ENCODE measurements at regions of chr16 and their contacts with region 1.

Region 1: GRCh38 chr16:23608194-23608593 is 12.1 kb upstream of the NDUFAB1 start:
- DNase-seq: no peak
- ATAC-seq: no peak
- H3K4me3 Mint-ChIP-seq: no peak overlapping the region
- H3K27ac Mint-ChIP-seq: no peak overlapping the region
- H3K4me1 Mint-ChIP-seq: no peaks in the 10 kb centered on the region
- H3K27me3 Mint-ChIP-seq: no peaks in the 10 kb centered on the region
- CTCF ChIP-seq: no peak

Region 2: DNA sequence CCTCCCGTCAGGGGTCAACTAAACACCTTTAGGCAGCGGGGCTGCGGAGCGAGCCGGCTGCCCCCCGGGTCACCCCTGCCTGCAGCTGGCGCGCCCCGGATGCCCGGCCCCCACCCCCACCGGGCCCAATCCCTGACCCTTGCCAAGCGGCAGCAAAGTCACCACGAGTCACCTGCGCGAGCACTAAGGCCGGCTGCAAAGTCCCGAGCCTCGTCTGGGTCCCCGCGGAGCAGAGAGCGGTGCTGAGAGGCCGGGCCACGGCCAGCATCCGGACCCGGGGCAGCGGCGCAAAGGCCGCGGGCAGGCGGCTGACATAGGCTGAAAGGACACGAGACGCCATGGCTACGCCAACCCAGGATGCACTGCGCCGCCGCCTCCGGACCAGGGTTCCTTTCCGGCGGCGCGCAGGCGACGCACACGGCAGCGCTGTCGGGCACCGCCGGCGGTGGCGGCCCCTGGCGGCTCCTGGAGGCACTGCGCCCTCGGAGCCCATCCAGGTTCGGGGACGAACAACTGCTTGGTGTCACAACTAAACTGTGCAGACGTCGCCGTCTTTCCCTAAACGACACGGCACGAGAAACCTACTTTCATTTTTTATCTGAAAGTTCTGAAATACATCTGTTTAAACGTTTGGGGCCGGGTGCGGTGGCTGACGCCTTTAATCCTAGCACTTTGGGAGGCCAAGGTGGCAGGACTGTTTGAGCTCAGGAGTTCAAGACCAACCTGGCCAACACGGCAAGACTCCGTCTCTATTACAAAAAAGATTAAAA is 12.1 kb before region 1 on chr16 and contains the start of gene NDUFAB1:
- CTCF ChIA-PET with region 1: interaction called, 11 read pairs
- POLR2A ChIA-PET with region 1: interaction called, 5 read pairs
- intact Hi-C with region 1: no loop called
- DNase-seq: peak; percentile 93
- ATAC-seq: peak; percentile 99
- H3K4me3 Mint-ChIP-seq: peak within 1 kb of the TSS; percentile 85
- H3K27ac Mint-ChIP-seq: peak within 1 kb of the TSS; percentile 82
- H3K4me1 Mint-ChIP-seq: peaks cover 27% of the 10 kb centered on the region
- H3K27me3 Mint-ChIP-seq: no peaks in the 10 kb centered on the region
- CTCF ChIP-seq: peak; percentile 95
- total RNA-seq, gene NDUFAB1: 157 to 162 TPM